ENCODE measurements at regions of chr11 and their contacts with region 1.

Region 1: DNA sequence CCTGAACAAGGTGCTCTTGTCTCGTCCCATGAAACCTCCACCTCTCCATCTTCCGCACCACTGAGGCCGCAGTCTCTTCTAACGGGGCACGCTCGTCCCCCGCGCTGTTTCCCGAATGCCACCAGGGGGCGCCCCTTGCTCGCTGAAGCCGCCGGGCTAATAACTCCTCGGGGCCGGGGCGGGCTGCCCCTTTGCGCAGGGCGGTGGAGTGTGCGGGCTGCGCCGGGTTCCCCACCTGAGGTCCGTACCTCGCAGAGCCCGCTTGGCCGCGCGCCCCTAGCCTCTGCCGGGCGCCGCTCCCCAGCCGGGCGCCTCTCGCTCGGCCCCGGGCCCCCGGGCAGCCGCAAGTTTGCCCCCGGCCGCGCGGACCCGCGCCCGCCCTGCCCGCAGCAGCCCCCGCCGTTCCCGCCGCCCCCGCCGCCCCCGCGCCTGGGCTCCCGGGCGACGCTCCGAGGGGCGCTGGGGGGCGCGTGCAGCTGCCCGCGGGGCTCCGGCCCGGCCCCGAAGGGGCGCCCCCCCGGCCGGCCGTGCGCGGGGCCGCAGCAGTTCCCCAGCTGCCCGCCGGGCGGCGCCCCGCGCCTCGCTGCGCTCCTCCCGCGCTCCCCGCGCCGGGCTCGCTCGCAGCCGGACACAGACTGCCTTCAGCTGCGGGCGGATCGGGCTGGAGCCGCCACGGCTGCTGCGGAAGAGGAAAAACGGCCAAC is at the start of gene GRIK4:
- DNase-seq: peak; percentile 61 to 76
- ATAC-seq: peak; percentile 82 to 93
- H3K4me3 ChIP-seq: peak within 1 kb of the TSS; percentile 70
- H3K27ac ChIP-seq: peak within 1 kb of the TSS; percentile 66 to 90
- H3K4me1 ChIP-seq: no peaks in the 10 kb centered on the region
- CTCF ChIP-seq: peak; percentile 64
- EP300 ChIP-seq: no peak
- POLR2A ChIP-seq: no peak
- RAD21 ChIP-seq: peak; percentile 89
- polyA plus RNA-seq, gene GRIK4: 0.01 and 0.03 TPM in 2 replicates

Region 2: GRCh38 chr11:120500414-120501071 is 10.7 kb before region 1 on chr11:
- CTCF ChIA-PET with region 1: interaction called, 18 read pairs
- POLR2A ChIA-PET with region 1: no interaction called
- DNase-seq: no peak
- ATAC-seq: 0 out of 6 replicates have a peak, but pooled peaks of 1 of the 2 experiments have one; percentile 54
- H3K4me3 ChIP-seq: no peak overlapping the region
- H3K27ac ChIP-seq: no peak overlapping the region
- H3K4me1 ChIP-seq: no peaks in the 10 kb centered on the region
- CTCF ChIP-seq: no peak
- EP300 ChIP-seq: no peak
- POLR2A ChIP-seq: no peak
- RAD21 ChIP-seq: no peak

Region 3: GRCh38 chr11:120523196-120523595 is 11.9 kb after region 1 on chr11:
- CTCF ChIA-PET with region 1: interaction called, 19 read pairs
- POLR2A ChIA-PET with region 1: no interaction called
- DNase-seq: no peak
- ATAC-seq: no peak
- H3K4me3 ChIP-seq: no peak overlapping the region
- H3K27ac ChIP-seq: no peak overlapping the region
- H3K4me1 ChIP-seq: no peaks in the 10 kb centered on the region
- CTCF ChIP-seq: no peak
- EP300 ChIP-seq: no peak
- POLR2A ChIP-seq: no peak
- RAD21 ChIP-seq: no peak

Region 4: DNA sequence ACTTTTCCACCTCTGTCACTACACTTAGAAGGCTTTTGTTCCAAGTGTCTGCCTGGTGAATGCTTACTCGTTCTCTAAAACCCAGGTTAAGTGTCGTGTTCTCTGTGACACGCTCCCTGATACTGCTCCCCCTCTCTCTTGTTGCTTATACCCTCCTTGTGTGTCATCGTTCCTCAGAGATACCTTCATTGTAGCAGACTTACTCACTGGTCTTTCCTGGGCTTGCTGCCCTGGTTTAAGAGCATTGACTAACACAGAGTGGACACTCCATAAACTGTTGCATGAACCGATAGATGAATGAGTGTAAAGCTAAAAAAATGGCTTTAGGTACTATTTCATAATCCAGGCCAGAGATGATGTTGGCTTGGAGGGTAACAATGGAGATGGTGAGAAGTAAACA is 171.6 kb after region 1 on chr11:
- CTCF ChIA-PET with region 1: interaction called, 58 read pairs
- POLR2A ChIA-PET with region 1: no interaction called
- DNase-seq: no peak
- ATAC-seq: no peak
- H3K4me3 ChIP-seq: no peak overlapping the region
- H3K27ac ChIP-seq: no peak overlapping the region
- H3K4me1 ChIP-seq: no peaks in the 10 kb centered on the region
- CTCF ChIP-seq: no peak
- EP300 ChIP-seq: no peak
- POLR2A ChIP-seq: no peak
- RAD21 ChIP-seq: no peak

Region 5: GRCh38 chr11:120801801-120802689 is 290.8 kb after region 1 on chr11:
- CTCF ChIA-PET with region 1: interaction called, 12 read pairs
- POLR2A ChIA-PET with region 1: no interaction called
- DNase-seq: peak; percentile 38 to 50
- ATAC-seq: peak; percentile 77 to 90; a peak in 5 of 6 replicates
- H3K4me3 ChIP-seq: no peak overlapping the region
- H3K27ac ChIP-seq: no peak overlapping the region
- H3K4me1 ChIP-seq: peaks cover 2% of the 10 kb centered on the region
- CTCF ChIP-seq: peak; percentile 49
- EP300 ChIP-seq: no peak
- POLR2A ChIP-seq: no peak
- RAD21 ChIP-seq: peak; percentile 35 to 53; a peak in 3 of 5 replicates

Region 6: GRCh38 chr11:120952461-120953434 is 441.5 kb after region 1 on chr11:
- CTCF ChIA-PET with region 1: interaction called, 19 read pairs
- POLR2A ChIA-PET with region 1: no interaction called
- DNase-seq: peak; percentile 67 to 74
- ATAC-seq: peak; percentile 84 to 95
- H3K4me3 ChIP-seq: 0 out of 3 replicates have a peak overlapping the region, but pooled peaks have one; percentile 10
- H3K27ac ChIP-seq: no peak overlapping the region
- H3K4me1 ChIP-seq: no peaks in the 10 kb centered on the region
- CTCF ChIP-seq: peak; percentile 57
- EP300 ChIP-seq: no peak
- POLR2A ChIP-seq: no peak
- RAD21 ChIP-seq: peak; percentile 76 to 82

Measured in A549 (cell line).